Astrocyte of the cerebellum (primary cell): ENCODE measurements at regions of chr9 and their contacts with region 1.

Region 1: GRCh38 chr9:4620057-4620760 is 41.9 kb upstream of the PLPP6 start:
- DNase-seq: no peak
- H3K4me3 ChIP-seq: no peak overlapping the region
- CTCF ChIP-seq: no peak

Region 2: GRCh38 chr9:4548811-4549725 is 71.1 kb before region 1 on chr9:
- in situ Hi-C with region 1: loop called (anchors 10 kb)
- DNase-seq: no peak
- H3K4me3 ChIP-seq: no peak overlapping the region
- CTCF ChIP-seq: no peak

Region 3: GRCh38 chr9:4700091-4700490 is 79.9 kb after region 1 on chr9:
- in situ Hi-C with region 1: loop called (anchors 5 kb)
- DNase-seq: no peak
- H3K4me3 ChIP-seq: no peak overlapping the region
- CTCF ChIP-seq: no peak